BJ (cell line): ENCODE measurements at regions of chr16 and their contacts with region 1.

Region 1: GRCh38 chr16:66872943-66873684 is 7.2 kb upstream of the PDP2 start:
- DNase-seq: peak; percentile 97
- H3K4me3 ChIP-seq: 0 out of 2 replicates have a peak overlapping the region, but pooled peaks have one; percentile 2
- H3K27me3 ChIP-seq: no peaks in the 10 kb centered on the region
- CTCF ChIP-seq: peak; percentile 97

Region 2: GRCh38 chr16:66406534-66407221 is 466.4 kb before region 1 on chr16:
- CTCF ChIA-PET with region 1: interaction called, 29 read pairs
- POLR2A ChIA-PET with region 1: no interaction called
- DNase-seq: no peak
- H3K4me3 ChIP-seq: peak overlapping the region; percentile 53
- H3K27me3 ChIP-seq: peaks cover 9% of the 10 kb centered on the region
- CTCF ChIP-seq: peak; percentile 80

Region 3: DNA sequence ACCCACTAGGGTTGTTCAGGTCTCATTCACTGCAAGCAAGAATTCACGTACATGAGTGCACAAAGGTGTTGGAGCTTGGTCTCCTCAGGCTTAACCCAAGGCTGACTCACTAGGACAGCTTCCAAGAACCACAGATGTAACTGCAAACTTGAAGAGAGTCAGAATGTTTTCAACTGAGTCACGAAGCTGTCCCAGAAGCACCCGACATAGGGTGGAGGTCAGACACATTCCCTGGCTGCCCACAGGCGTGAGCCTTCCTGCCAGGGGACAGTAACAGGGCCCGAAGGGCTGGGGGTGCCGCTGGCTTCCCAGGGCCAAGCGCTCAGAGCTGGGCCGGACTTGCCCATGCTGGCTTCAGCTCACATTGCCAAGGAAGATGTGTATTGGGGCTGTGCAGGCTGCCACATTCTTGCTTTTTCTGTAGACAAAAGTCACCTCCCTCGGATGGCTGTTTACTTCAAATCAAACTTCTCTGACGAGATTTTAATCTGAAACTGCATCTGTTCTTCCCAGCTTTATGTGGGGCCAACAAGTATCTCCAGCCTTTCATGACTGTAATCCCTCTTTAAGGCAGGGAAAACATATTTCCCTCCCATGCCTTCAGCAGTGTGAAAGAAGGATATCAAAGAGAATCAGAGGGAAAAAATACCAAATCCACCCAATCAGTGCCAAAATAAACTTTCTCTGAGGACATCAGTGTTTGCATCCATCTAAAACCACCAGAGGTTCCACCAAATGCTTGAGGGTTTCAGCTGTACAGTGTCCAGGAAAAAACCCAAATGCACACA is 254.3 kb before region 1 on chr16:
- CTCF ChIA-PET with region 1: interaction called, 4 read pairs
- POLR2A ChIA-PET with region 1: interaction called, 15 read pairs
- DNase-seq: peak; percentile 96
- H3K4me3 ChIP-seq: no peak overlapping the region
- H3K27me3 ChIP-seq: no peaks in the 10 kb centered on the region
- CTCF ChIP-seq: no peak

Region 4: DNA sequence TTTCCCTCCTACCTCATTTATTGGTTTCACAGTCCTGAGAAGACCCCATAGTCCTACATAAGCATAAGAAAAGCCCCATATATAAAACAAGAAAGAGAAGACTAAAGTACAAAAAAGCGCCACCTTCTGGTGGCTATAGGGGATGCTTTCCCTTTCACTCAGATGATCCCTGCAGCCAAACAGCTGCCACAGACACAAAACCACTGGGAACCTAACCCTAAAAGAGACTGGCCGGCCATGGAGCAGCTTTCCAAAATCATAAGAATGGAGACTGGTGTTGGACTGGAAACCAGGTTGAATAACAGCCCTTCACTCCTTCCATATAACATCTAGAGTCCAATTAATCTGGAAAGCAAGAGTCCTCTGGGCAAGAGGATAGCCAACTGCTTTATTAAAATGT is 133.1 kb before region 1 on chr16:
- CTCF ChIA-PET with region 1: interaction called, 18 read pairs
- POLR2A ChIA-PET with region 1: no interaction called
- DNase-seq: no peak
- H3K4me3 ChIP-seq: no peak overlapping the region
- H3K27me3 ChIP-seq: no peaks in the 10 kb centered on the region
- CTCF ChIP-seq: peak; percentile 62

Region 5: GRCh38 chr16:66830422-66831404 is 42.4 kb before region 1 on chr16 and contains the start of gene NAE1:
- CTCF ChIA-PET with region 1: interaction called, 50 read pairs
- POLR2A ChIA-PET with region 1: no interaction called
- DNase-seq: peak; percentile 32
- H3K4me3 ChIP-seq: peak within 1 kb of the TSS; percentile 73
- H3K27me3 ChIP-seq: no peaks in the 10 kb centered on the region
- CTCF ChIP-seq: peak; percentile 86
- polyA plus RNA-seq, gene NAE1: 27.3 and 43.6 TPM in 2 replicates

Region 6: DNA sequence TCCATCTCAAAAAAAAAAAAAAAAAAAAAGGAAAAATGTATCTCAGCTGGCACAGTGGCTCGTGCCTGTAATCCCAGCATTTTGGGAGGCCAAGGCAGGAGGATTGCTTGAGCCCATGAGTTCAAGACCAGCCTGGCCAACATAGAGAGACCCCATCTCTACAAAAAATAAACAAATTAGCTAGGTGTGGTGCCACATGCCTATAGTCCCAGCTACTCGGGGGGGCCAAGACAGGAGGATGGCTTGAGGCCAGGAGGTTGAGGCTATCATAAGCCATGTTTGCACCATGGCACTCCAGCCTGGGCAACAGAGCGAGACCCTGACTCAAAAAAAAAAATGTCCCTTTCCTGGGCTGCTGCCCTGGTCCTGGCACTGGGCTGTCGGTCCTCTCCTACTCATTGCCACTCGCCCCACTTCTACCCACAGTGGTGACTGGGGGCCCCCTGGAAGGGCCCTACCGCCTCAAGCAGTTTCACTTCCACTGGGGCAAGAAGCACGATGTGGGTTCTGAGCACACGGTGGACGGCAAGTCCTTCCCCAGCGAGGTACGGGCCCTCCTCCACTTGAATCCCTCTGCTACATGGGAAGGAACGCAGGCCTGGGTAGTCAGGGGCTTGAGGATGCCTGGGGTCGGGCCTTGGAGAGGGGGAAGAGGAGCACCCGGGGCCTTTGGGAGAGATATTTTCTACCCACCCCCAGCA is 22.8 kb before region 1 on chr16:
- CTCF ChIA-PET with region 1: interaction called, 28 read pairs
- POLR2A ChIA-PET with region 1: no interaction called
- DNase-seq: no peak
- H3K4me3 ChIP-seq: no peak overlapping the region
- H3K27me3 ChIP-seq: peaks cover 23% of the 10 kb centered on the region
- CTCF ChIP-seq: no peak